GM18951 (cell line): ENCODE measurements at regions of chr9 and their contacts with region 1.

Region 1: DNA sequence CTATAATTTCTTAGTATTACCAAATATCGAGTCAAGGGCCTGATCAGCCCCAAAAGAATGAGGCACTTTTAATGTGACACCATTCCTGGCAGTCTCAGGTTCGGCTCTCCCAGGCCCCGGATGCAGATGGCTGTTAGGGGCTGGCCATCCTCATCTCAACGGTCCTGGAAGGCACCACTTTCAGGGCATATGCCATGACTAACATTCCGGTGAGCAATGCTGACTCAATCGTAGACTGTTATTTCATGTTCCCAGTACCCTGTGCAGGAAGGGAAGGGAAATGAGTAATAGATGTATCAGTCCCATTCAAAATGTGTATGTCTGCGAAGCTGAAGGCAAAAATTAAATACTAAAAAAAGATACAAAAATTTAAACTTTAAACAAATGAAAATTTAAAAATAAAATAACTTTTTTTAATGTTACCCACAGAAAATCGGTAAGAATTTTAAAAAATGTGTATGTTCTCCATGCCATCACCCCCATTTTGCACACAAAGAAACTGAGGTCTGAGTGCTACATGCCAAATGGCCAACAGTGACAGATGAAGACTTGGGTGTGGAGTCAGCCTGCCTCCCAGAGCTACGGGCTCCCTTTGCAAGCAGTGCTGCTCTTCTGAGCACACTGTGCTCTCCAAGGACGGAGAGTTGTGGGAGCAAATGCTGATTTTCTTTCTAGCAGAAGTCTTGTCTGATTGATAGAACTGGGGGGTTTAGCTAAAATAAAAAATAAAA is 79.0 kb downstream of the GLDC start:
- POLR2A ChIP-seq: no peak

Region 2: DNA sequence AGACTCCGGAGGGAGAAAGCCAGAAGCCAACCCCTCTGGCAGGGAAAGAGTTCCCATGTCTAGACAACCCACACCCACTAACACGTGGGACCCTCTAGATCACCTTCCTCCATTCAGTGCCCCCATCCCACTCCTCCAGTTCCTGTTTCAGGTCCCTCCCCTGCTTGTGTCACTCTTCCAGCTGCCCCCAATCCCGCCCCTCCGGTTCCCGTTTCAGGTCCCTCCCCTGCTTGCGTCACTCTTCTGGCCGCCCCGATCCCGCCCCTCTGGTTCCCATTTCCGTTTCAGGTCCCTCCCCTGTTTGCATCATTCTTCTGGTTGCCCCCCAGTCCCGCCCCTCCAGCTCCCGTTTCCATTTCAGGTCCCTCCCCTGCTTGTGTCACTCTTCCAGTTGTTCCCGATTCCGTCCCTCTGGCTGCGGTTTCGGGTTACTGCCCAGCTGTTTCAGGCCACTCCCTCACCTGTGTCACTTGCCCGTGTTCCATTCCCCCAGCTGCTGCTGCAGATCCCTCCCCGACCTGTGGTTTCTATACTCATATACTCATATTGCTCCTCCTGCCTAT is 486.3 kb before region 1 on chr9:
- in situ Hi-C with region 1: loop called (anchors 25 kb)
- POLR2A ChIP-seq: no peak

Region 3: GRCh38 chr9:6268830-6269397 is 297.7 kb before region 1 on chr9:
- in situ Hi-C with region 1: no loop called
- POLR2A ChIP-seq: no peak

Region 4: DNA sequence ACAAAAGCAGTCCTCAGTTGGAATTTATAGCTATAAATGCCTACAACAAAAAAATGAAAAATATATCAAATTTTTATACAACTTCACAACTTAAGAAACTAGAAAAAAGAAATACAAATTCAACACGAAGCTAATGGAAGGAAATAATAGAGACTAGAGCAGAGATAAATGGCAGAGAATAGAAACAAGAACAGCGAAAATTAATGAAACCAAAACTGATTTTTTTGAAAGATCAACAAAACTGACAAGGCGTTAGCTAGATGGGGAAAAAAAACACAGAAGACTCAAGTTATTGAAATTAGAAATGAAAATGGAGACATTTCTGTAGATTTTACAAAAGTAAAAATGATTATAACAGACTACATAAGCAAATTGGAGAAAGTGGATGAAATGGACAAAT is 217.8 kb before region 1 on chr9:
- in situ Hi-C with region 1: loop called (anchors 5 kb)
- POLR2A ChIP-seq: no peak